H1 (cell line): ENCODE measurements at regions of chr1 and their contacts with region 1.

Region 1: GRCh38 chr1:156689035-156689952 is 12.1 kb upstream of the NES start:
- DNase-seq: peak in 1 of 2 experiments; percentile 92
- H3K4me3 ChIP-seq: peak overlapping the region in 3 of 4 experiments; percentile 36 to 55 (median 52); a peak in 6 of 8 replicates
- H3K27ac ChIP-seq: no peak overlapping the region
- H3K4me1 ChIP-seq: peaks cover 20 to 47% (median 36%) of the 10 kb centered on the region in 4 experiments
- H3K27me3 ChIP-seq: peaks cover 0 to 7% (median 0%) of the 10 kb centered on the region in 4 experiments; a peak in 2 of 7 replicates
- CTCF ChIP-seq: peak; percentile 91 to 98 (median 97)
- EP300 ChIP-seq: no peak; a peak in 1 of 3 replicates
- POLR2A ChIP-seq: no peak
- RAD21 ChIP-seq: peak; percentile 99 to 100

Region 2: DNA sequence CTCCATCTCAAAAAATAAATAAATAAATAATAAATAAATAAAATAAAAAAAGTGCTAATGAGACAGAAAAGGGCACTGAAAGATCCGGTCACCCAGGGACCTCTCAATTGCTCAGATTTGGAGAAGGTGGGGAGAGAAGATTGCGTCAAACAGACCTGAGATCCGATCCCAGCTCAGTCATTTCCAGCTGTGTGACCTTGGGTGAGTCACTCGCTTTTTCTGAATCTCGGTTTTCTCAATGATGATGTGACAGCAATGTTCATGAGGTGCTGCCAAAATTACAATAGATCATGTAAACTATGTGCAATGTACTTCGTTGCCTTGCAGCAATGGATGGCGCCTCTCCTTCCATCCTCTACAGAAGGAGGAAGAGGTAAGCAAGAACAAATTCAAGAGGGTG is 177.7 kb before region 1 on chr1:
- CTCF ChIA-PET with region 1: no interaction called
- POLR2A ChIA-PET with region 1: no interaction called
- DNase-seq: no peak
- H3K4me3 ChIP-seq: no peak overlapping the region
- H3K27ac ChIP-seq: no peak overlapping the region
- H3K4me1 ChIP-seq: peaks cover 0 to 11% (median 4%) of the 10 kb centered on the region in 4 experiments; a peak in 1 of 7 replicates
- H3K27me3 ChIP-seq: no peaks in the 10 kb centered on the region
- CTCF ChIP-seq: no peak
- EP300 ChIP-seq: no peak
- POLR2A ChIP-seq: no peak
- RAD21 ChIP-seq: no peak

Region 3: GRCh38 chr1:156677616-156678596 is 11.4 kb before region 1 on chr1:
- CTCF ChIA-PET with region 1: interaction called, 4,284 read pairs
- POLR2A ChIA-PET with region 1: interaction called, 208 read pairs
- DNase-seq: peak in 1 of 2 experiments; percentile 74
- H3K4me3 ChIP-seq: peak overlapping the region; percentile 64 to 84 (median 74); a peak in 5 of 8 replicates
- H3K27ac ChIP-seq: no peak overlapping the region
- H3K4me1 ChIP-seq: peaks cover 7 to 37% (median 30%) of the 10 kb centered on the region in 4 experiments
- H3K27me3 ChIP-seq: no peaks in the 10 kb centered on the region; a peak in 2 of 7 replicates
- CTCF ChIP-seq: peak in 2 of 3 experiments; percentile 92 to 97; a peak in 3 of 4 replicates
- EP300 ChIP-seq: no peak
- POLR2A ChIP-seq: no peak
- RAD21 ChIP-seq: peak; percentile 89 to 95

Region 4: DNA sequence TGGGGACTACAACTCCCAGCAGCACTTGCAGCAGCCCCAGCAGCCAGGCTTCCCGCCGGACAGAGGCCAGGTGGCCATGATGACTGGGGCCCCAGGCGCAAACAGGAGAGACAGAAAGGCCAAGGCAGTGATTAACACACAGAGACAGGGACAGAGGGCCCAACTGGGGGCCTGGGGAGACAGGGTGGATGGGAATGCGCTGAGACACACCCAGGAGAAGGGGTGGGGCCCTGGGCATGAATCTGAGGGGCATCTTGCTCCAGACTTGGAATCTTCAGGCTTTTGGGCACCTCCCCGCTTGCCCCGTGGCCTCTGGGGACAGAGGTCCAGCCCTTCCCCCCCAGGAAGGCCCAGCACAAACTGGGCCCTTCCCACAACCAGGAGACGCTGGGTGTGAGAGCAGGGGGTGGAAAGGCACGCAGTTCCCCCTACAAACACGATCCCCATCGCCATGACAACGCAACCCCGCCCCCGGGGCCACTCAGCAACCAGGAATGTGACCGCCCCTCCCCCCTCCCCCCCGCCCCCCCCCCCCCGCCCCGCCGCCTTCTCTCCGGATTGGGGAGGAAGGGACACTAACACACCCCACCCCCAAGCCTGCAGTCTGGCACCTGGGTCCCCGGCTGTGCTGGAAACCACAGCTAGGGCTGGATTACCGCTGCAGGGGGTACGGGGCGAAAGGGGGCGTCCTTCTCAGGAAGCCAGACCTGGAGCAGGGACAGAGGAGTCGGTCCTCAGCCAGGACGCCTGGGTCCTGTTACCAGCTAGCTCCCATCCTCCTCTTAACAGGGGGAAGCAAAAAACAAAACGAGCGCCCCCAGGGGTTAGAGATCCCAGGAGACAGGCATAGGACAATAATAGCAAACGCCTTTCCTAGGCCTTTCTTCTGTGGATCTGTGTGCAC is 57.7 kb after region 1 on chr1:
- CTCF ChIA-PET with region 1: interaction called, 24 read pairs
- POLR2A ChIA-PET with region 1: interaction called, 22 read pairs
- DNase-seq: peak in 1 of 2 experiments; percentile 91
- H3K4me3 ChIP-seq: peak overlapping the region; percentile 52 to 100 (median 64)
- H3K27ac ChIP-seq: peak overlapping the region; percentile 100
- H3K4me1 ChIP-seq: peaks cover 32 to 47% (median 33%) of the 10 kb centered on the region in 4 experiments
- H3K27me3 ChIP-seq: no peaks in the 10 kb centered on the region
- CTCF ChIP-seq: peak in 2 of 3 experiments; percentile 26 to 37; a peak in 3 of 4 replicates
- EP300 ChIP-seq: no peak
- POLR2A ChIP-seq: peak; percentile 82 to 89
- RAD21 ChIP-seq: no peak; a peak in 1 of 4 replicates

Region 5: DNA sequence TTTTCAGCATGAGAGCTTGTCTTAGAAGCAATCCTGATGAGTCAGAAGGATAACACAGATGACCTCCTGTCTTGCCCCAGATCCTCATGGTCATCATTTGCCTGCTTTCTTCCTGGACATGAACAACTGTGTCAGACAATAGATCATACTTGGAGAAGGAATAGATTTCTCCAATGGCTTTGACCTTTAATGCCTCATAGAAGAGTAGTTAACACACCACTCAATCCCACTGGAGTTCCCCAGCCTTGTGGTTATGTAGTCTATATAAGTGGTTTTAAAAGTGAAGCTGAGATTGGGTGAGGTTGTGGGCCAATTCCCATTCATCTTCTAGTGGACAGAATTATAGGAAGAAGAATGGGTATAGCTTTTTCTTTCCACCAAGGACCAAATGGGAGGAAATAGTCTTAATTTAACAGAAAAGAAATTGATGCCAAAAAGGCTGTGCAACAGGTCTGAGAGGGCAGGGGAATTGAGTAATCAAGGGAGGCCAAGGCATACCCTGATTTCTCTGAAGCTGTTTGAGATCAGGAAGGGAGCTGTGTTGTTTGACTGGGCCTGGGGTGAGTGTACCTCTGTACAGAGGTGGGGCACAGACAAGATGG is 92.4 kb after region 1 on chr1:
- CTCF ChIA-PET with region 1: interaction called, 10 read pairs
- POLR2A ChIA-PET with region 1: no interaction called
- DNase-seq: no peak
- H3K4me3 ChIP-seq: no peak overlapping the region
- H3K27ac ChIP-seq: no peak overlapping the region
- H3K4me1 ChIP-seq: no peaks in the 10 kb centered on the region
- H3K27me3 ChIP-seq: no peaks in the 10 kb centered on the region
- CTCF ChIP-seq: no peak
- EP300 ChIP-seq: no peak
- POLR2A ChIP-seq: no peak
- RAD21 ChIP-seq: no peak

Region 6: GRCh38 chr1:156805766-156806511 is 116.6 kb after region 1 on chr1:
- CTCF ChIA-PET with region 1: interaction called, 28 read pairs
- POLR2A ChIA-PET with region 1: interaction called, 3 read pairs
- DNase-seq: no peak
- H3K4me3 ChIP-seq: no peak overlapping the region
- H3K27ac ChIP-seq: no peak overlapping the region
- H3K4me1 ChIP-seq: no peaks in the 10 kb centered on the region; a peak in 1 of 7 replicates
- H3K27me3 ChIP-seq: peaks cover 0 to 2% (median 0%) of the 10 kb centered on the region in 4 experiments; a peak in 1 of 7 replicates
- CTCF ChIP-seq: no peak
- EP300 ChIP-seq: no peak
- POLR2A ChIP-seq: no peak
- RAD21 ChIP-seq: no peak

Region 7: DNA sequence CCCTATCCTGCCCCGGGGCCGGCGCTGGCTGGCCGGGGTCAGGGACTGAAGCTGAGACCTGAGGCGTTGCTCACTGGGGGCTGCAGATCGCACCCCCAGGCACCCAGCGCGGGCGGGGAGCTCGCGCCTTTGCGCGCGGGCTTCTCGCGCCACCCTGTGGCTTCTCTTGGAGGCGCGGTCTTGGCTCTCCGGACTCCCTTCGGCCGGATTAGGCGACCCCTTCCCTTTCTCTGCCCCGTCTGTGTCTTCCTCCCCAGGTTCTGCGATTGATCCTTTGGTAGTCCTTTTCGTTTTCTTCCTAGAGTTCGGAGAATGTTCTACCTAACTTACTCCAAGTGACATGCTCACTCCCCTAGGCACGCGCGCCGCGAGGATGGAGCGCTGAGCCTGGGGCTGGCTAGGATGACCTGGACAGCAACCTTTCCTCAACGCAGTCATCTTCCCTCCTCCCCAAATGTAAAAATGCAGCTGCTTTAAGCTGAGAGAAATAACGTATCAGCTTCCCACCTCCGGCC is 170.9 kb after region 1 on chr1:
- CTCF ChIA-PET with region 1: interaction called, 132 read pairs
- POLR2A ChIA-PET with region 1: interaction called, 5 read pairs
- DNase-seq: peak in 1 of 2 experiments; percentile 85
- H3K4me3 ChIP-seq: peak overlapping the region; percentile 31 to 62 (median 58)
- H3K27ac ChIP-seq: no peak overlapping the region
- H3K4me1 ChIP-seq: peaks cover 0 to 15% (median 9%) of the 10 kb centered on the region in 4 experiments; a peak in 6 of 7 replicates
- H3K27me3 ChIP-seq: peaks cover 55 to 87% (median 82%) of the 10 kb centered on the region in 4 experiments
- CTCF ChIP-seq: peak; percentile 67 to 80 (median 74)
- EP300 ChIP-seq: no peak
- POLR2A ChIP-seq: no peak
- RAD21 ChIP-seq: peak; percentile 76 to 83

Region 8: GRCh38 chr1:156927215-156928042 is 238.1 kb after region 1 on chr1:
- CTCF ChIA-PET with region 1: interaction called, 50 read pairs
- POLR2A ChIA-PET with region 1: no interaction called
- DNase-seq: peak in 1 of 2 experiments; percentile 90
- H3K4me3 ChIP-seq: peak overlapping the region; percentile 36 to 70 (median 62)
- H3K27ac ChIP-seq: no peak overlapping the region
- H3K4me1 ChIP-seq: peaks cover 3 to 21% (median 9%) of the 10 kb centered on the region in 4 experiments; a peak in 6 of 7 replicates
- H3K27me3 ChIP-seq: peaks cover 51 to 71% (median 69%) of the 10 kb centered on the region in 4 experiments
- CTCF ChIP-seq: peak; percentile 90 to 92 (median 92)
- EP300 ChIP-seq: no peak
- POLR2A ChIP-seq: no peak
- RAD21 ChIP-seq: peak; percentile 88 to 93